HepG2 (cell line): ENCODE measurements at regions of chr20 and their contacts with region 1.

Region 1: GRCh38 chr20:33489495-33490022 is 337 bp upstream of the CBFA2T2 start:
- DNase-seq: peak; percentile 97
- ATAC-seq: peak; percentile 95
- H3K4me3 ChIP-seq: peak overlapping the region; percentile 65 to 79 (median 71)
- H3K27ac ChIP-seq: peak overlapping the region; percentile 75
- H3K4me1 ChIP-seq: peaks cover 32% of the 10 kb centered on the region
- H3K27me3 ChIP-seq: peaks cover 0 to 5% of the 10 kb centered on the region in 2 experiments; a peak in 1 of 5 replicates
- CTCF ChIP-seq: peak; percentile 29; the same call in 1 of the 2 replicates
- EP300 ChIP-seq: no peak
- POLR2A ChIP-seq: peak; percentile 95 to 99
- RAD21 ChIP-seq: no peak; the same call in 1 of the 2 replicates

Region 2: GRCh38 chr20:33443512-33444239 is 45.9 kb before region 1 on chr20 and contains the start of gene SNTA1:
- CTCF ChIA-PET with region 1: no interaction called
- POLR2A ChIA-PET with region 1: interaction called, 28 read pairs
- in situ Hi-C with region 1: no loop called
- intact Hi-C with region 1: no loop called
- DNase-seq: peak; percentile 92
- ATAC-seq: peak; percentile 85
- H3K4me3 ChIP-seq: peak within 1 kb of the TSS; percentile 64 to 95 (median 72)
- H3K27ac ChIP-seq: peak within 1 kb of the TSS; percentile 45
- H3K4me1 ChIP-seq: peaks cover 54% of the 10 kb centered on the region
- H3K27me3 ChIP-seq: peaks cover 0 to 10% of the 10 kb centered on the region in 2 experiments; a peak in 2 of 5 replicates
- CTCF ChIP-seq: no peak
- EP300 ChIP-seq: 0 out of 4 replicates have a peak, but pooled peaks of 1 of the 2 experiments have one; percentile 7
- POLR2A ChIP-seq: no peak; a peak in 1 of 4 replicates
- RAD21 ChIP-seq: peak; percentile 84
- total RNA-seq, gene SNTA1: 14.8 and 16.4 TPM in 2 replicates

Region 3: GRCh38 chr20:33501000-33501399 is 11.4 kb after region 1 on chr20:
- CTCF ChIA-PET with region 1: no interaction called
- POLR2A ChIA-PET with region 1: interaction called, 12 read pairs
- in situ Hi-C with region 1: no loop called
- intact Hi-C with region 1: no loop called
- DNase-seq: no peak
- ATAC-seq: no peak
- H3K4me3 ChIP-seq: no peak overlapping the region
- H3K27ac ChIP-seq: no peak overlapping the region
- H3K4me1 ChIP-seq: peaks cover 10% of the 10 kb centered on the region
- H3K27me3 ChIP-seq: no peaks in the 10 kb centered on the region
- CTCF ChIP-seq: no peak
- EP300 ChIP-seq: no peak
- POLR2A ChIP-seq: no peak
- RAD21 ChIP-seq: no peak

Region 4: DNA sequence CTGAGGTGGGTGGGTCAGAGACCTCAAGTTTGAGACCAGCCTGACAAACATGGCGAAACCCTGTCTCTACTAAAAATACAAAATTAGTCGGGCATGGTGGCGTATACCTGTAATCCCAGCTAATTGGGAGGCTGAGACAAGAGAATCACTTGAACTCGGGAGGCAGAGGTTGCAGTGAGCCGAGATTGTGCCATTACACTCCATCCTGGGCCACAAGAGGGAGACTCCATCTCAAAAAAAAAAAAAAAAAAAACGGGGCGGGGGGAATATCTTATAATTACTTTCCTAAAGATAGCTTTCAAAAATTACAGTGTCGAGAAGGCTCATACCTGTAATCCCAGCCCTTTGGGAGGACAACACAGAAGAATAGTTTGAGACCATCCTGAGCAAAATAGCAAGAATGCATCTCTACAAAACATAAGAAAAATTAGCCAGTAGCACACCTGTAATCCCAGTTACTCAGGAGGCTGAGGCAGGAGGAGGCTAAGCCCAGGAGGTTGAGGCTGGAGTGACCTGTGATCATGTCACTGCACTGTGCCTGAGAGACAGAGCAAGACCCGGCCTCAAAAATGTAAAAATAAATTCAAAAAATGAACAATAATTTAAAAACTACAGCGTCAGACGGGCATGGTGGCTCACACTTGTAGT is 26.1 kb after region 1 on chr20:
- CTCF ChIA-PET with region 1: no interaction called
- POLR2A ChIA-PET with region 1: interaction called, 6 read pairs
- in situ Hi-C with region 1: no loop called
- intact Hi-C with region 1: loop called (anchors 2 kb)
- DNase-seq: peak; percentile 27
- ATAC-seq: no peak
- H3K4me3 ChIP-seq: no peak overlapping the region
- H3K27ac ChIP-seq: no peak overlapping the region
- H3K4me1 ChIP-seq: peaks cover 51% of the 10 kb centered on the region
- H3K27me3 ChIP-seq: no peaks in the 10 kb centered on the region
- CTCF ChIP-seq: peak; percentile 56
- EP300 ChIP-seq: no peak
- POLR2A ChIP-seq: no peak
- RAD21 ChIP-seq: no peak

Region 5: GRCh38 chr20:33666293-33667244 is 177.0 kb after region 1 on chr20 and contains the start of gene ACTL10:
- CTCF ChIA-PET with region 1: no interaction called
- POLR2A ChIA-PET with region 1: interaction called, 19 read pairs
- in situ Hi-C with region 1: no loop called
- intact Hi-C with region 1: no loop called
- DNase-seq: no peak
- ATAC-seq: no peak
- H3K4me3 ChIP-seq: no peak within 1 kb of the TSS
- H3K27ac ChIP-seq: no peak within 1 kb of the TSS
- H3K4me1 ChIP-seq: peaks cover 48% of the 10 kb centered on the region
- H3K27me3 ChIP-seq: no peaks in the 10 kb centered on the region; a peak in 1 of 5 replicates
- CTCF ChIP-seq: no peak
- EP300 ChIP-seq: no peak
- POLR2A ChIP-seq: no peak
- RAD21 ChIP-seq: no peak
- total RNA-seq, gene ACTL10: not detected in 2 replicates